ENCODE measurements at regions of chr5 and their contacts with region 1.

Region 1: DNA sequence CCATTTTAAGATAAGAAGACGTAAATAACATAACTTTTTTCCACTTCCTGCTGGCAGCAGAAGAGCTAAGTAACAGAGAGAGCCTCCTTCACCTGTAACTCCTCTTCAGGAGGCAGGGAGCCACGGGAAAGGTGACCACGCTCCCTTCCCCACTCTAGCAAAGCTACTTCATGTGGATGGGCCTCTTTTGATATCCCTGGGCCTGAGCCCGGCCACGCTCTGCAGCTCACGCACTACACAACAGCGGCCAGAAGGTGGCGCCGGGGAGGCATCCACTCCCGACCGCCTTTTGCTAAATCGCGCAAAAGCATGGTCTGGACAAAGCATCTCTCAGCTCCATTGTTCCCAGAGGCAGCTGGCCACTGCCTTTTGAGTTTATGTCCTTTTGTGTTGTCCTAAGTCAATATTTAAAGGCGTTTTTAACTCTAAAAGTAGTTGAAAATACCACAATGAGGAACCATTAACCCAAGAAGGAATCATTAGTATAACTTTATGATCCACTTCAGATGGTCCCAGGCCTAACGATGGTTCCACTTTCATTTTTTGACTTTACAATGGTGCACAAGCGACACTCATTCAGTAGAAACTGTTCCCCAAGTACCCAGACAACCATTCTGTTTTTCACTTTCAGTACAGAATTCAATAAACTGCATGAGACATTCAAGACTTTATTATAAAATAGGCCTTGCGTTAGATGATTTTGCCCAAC is 23.6 kb downstream of the CMBL start:
- DNase-seq: peak; percentile 77 to 98 (median 92)

Region 2: DNA sequence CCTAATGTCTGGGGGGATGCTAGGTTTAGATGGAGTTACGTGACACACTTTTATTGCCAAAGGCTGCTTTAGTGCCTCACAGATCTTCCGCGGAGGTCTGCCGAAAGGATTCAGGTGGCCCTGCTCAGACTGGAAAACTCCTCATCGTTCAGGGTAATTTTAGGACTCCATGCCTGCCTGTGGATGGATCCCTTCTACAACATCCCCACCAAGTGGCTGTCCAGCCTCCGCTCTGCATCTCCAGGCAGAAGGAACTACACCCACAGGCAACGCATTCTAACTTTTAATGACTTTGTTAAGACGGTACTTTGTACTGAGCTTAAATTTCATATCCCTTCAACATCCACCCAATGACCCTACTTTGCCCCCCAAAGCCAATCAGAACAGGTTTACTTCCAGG is 63.8 kb before region 1 on chr5:
- intact Hi-C with region 1: no loop called
- DNase-seq: peak in 5 of 10 donors; percentile 14 to 75 (median 42)

Region 3: DNA sequence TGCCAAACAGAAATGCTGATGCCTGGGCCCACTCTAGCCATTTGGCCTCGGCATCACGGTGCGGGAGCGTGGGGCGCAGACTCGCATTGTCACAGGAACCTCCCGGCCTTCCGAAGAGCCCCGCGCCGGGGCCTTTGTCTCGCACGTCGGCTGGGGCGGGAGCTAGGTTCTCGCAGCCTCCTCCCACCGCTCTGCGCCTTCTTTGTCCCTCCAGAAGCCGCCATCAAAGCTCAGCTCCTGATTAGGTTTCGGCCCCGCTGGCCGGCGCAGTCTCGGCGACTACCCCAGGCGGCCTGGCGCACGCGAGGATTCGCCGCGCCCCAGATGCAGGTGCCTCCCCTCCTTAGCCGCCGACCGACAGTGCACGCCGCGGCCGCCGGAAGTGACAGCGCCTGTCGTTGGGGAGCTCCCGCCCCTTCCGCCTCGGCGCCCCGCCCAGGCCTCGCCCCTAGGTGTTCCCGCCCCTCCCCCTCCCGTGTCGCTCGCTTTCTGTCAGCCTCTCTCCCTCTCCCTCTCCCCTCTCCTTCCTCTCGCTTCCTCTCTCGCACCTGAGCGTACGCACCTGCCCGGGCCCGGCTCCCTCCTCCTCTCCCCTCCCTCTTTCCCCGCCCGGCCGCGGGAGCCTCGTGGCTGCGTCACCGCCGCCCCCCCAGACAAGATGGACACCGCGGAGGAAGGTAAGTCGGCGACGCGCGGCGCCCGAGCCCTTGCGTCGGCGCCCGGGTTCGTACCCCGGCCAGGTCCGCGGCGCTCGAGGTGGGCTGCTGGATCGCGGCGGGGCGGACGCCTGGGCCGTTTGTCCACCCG is 69.4 kb after region 1 on chr5 and contains the start of gene MARCHF6:
- intact Hi-C with region 1: loop called (anchors 10 kb)
- DNase-seq: peak; percentile 86 to 99 (median 94)

Region 4: DNA sequence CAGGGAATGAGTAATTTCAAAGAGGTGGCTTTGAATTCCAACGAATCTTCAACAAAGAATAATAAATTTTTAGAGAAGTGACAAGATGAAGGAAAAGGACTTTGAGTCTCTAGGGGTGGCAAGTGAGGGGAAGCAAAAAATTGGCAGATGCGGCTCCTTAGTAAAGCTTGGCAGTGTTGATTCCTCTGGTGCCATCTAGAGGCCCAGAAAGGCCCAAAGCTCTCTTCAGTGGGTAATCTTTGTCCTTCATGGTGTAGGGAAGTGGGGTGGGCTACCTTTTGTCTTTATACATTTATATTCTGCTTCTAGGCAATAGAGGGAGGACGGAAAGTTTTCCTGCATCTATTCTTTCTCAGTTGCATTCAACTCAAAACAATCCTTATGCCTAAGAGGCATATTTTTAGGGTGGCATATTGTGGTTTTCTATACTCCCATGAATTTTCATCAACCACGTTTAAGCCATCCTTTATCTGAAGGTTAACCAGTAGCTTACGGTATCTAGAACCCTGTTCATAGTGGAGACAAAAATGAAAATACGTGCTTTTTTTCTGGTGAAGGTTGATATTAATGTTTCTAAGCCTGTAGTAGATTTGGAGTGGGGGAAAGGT is 140.1 kb after region 1 on chr5:
- intact Hi-C with region 1: loop called (anchors 1 kb)
- DNase-seq: peak in 6 of 10 donors; percentile 22 to 83 (median 48)

Region 5: GRCh38 chr5:10627160-10627701 is 343.1 kb after region 1 on chr5:
- intact Hi-C with region 1: loop called (anchors 10 kb)
- DNase-seq: peak in 1 of 10 donors; percentile 78

Region 6: GRCh38 chr5:10801931-10802659 is 518.0 kb after region 1 on chr5:
- intact Hi-C with region 1: no loop called
- DNase-seq: peak in 1 of 10 donors; percentile 54

Measured in posterior cingulate gyrus (tissue), 11 donors.